ENCODE measurements at regions of chr11 and their contacts with region 1.

Region 1: GRCh38 chr11:9534791-9535781 is 38.4 kb upstream of the WEE1 start:
- DNase-seq: peak; percentile 78
- H3K4me3 ChIP-seq: no peak overlapping the region
- H3K27ac ChIP-seq: no peak overlapping the region
- H3K4me1 ChIP-seq: peaks cover 6% of the 10 kb centered on the region
- H3K27me3 ChIP-seq: no peaks in the 10 kb centered on the region
- CTCF ChIP-seq: peak; percentile 86 to 89

Region 2: DNA sequence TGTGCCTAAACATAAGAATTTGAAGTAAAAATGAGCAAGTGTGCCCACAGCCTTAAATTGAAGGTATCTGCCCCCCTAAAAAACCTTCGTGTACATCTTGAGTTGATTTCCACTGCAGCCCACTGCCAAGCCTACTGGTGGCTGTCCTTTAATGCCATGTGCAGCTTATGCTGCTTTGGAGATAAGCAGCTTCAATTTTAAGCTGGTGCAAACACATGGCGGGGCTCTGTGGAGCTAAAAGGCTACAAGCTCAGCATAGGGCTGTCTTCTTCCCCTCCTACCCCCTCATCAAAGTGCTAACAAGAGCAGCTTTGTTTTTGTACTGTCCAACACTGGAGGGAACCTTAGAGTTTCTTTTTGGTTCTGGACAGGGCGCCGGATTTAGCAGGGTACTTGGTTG is 1142.9 kb before region 1 on chr11:
- CTCF ChIA-PET with region 1: interaction called, 12 read pairs
- dilution Hi-C with region 1: no loop called
- in situ Hi-C with region 1: no loop called
- intact Hi-C with region 1: no loop called
- DNase-seq: no peak
- H3K4me3 ChIP-seq: no peak overlapping the region
- H3K27ac ChIP-seq: no peak overlapping the region
- H3K4me1 ChIP-seq: peaks cover 4% of the 10 kb centered on the region
- H3K27me3 ChIP-seq: peaks cover 2% of the 10 kb centered on the region
- CTCF ChIP-seq: no peak

Region 3: DNA sequence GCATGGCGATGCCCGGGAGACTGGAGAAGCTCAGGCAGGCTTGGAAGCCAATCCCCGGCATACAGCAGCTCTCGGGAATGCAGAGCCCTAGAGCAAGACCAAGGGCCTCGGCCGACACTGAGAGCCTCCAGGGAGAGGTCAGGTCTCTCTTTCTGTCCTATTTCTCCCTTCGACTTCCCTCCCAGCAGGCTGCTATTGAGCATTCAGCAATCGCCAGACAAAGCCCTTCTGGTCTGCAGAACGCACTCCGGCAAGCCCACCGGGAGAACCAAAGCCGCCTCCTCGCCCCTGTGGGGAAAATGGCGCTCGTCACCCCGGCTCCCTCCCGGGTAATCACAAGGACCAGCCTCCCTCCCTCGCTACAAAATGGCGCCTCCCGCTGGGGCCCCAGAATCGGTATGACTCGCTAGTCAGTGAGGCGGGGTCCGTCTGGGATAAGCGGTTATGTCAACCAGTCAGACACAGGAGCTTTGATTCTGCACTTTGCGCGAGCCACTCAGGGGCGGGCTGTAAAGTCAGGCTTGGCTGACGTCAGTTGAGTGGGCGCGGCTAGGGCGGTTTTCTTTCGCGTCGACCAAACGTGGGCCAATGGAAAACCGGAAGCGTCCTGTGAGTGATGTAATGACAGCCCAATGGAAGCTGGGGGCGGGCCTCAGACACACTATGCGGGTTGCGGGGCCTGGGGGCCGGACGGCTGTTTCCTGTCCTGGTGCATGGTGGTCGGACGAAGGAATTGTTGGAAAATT is 74.6 kb before region 1 on chr11 and contains the start of gene ZNF143:
- CTCF ChIA-PET with region 1: no interaction called
- dilution Hi-C with region 1: loop called (anchors 5 kb)
- in situ Hi-C with region 1: no loop called
- intact Hi-C with region 1: no loop called
- DNase-seq: peak; percentile 100
- H3K4me3 ChIP-seq: peak within 1 kb of the TSS; percentile 65 to 88 (median 82)
- H3K27ac ChIP-seq: peak within 1 kb of the TSS; percentile 98
- H3K4me1 ChIP-seq: peaks cover 19% of the 10 kb centered on the region
- H3K27me3 ChIP-seq: no peaks in the 10 kb centered on the region
- CTCF ChIP-seq: no peak
- total RNA-seq, gene ZNF143: 19.5 to 22.7 TPM

Region 4: DNA sequence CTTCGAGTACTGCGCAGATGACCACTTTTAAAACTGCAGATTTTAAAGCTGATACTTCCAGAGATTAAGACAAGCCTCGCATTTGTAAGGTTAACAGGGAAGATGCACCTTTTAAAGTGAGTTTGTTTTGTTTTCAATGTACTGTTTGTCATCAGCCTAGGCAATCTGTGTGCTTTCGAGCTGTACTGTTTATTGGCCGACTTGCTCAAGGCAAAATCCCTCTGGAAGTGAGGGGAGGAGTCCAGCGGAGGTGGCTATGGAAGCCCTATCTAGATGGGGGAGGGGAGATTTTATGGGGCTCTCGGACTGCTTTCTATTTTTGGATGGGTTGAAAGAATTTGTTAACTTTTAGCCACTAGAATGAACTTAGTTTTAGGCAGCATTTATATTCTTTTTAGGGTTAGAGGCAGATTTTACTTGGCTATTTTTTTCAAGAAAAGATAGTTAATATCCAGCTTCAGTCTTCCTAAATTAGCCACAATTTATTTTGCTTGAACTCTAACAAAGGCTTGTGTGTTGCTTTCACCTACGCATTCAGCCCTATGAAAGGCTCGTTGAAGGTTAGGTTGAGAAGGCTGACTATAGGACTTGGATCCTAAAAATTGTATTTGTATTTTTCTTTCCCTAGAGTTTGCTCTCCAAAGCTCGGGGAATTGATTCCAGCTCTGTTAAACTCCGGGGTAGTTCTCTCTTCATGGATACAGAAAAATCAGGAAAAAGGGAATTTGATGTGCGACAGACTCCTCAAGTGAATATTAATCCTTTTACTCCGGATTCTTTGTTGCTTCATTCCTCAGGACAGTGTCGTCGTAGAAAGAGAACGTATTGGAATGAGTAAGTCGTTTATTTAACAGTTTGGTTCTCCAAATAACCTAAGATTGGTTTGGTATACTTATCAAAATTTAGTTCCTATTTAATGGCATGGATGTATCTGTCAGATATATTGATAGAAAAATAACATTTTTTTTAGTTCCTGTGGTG is 40.5 kb after region 1 on chr11:
- CTCF ChIA-PET with region 1: interaction called, 11 read pairs
- dilution Hi-C with region 1: no loop called
- in situ Hi-C with region 1: no loop called
- intact Hi-C with region 1: loop called (anchors 1 kb)
- DNase-seq: peak; percentile 86
- H3K4me3 ChIP-seq: peak overlapping the region; percentile 87 to 97 (median 89)
- H3K27ac ChIP-seq: peak overlapping the region; percentile 96
- H3K4me1 ChIP-seq: peaks cover 17% of the 10 kb centered on the region
- H3K27me3 ChIP-seq: no peaks in the 10 kb centered on the region
- CTCF ChIP-seq: no peak

Region 5: DNA sequence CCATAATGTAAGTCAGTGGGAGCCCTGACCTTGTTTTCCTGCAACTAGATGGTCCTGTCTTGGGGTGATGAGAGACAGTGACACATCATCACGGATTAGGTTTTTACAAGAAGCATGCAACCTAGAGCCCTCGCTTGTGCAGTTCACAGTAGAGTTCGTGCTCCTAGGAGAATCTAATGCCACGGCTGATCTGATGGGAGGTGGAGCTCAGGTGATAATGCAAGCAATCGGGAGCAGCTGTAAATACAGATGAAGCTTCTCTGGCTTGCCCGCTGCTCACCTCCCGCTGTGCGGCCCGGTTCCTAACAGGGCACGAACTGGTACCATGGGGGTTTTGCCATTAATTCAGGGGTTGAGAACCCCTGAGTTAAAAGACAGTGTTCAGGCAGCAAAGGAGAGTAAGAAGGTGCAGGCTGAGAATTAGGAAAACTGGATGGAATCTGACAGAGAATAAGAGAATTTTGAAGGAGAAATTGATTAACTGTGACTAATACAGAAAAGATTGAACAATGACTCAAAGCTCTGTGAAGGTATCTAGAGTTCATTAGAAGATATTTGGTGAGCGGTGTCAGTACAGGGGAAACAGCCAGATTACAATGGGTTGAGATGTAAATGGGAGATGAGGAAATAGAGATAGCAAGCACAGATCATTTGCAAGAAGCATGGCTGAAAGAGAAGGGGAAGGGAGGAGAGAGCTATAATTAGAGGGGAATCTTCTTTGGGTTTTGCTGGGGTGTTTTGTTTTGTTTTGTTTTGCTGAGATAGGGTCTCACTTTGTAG is 59.4 kb after region 1 on chr11:
- CTCF ChIA-PET with region 1: no interaction called
- dilution Hi-C with region 1: loop called (anchors 5 kb)
- in situ Hi-C with region 1: no loop called
- intact Hi-C with region 1: no loop called
- DNase-seq: no peak
- H3K4me3 ChIP-seq: no peak overlapping the region
- H3K27ac ChIP-seq: no peak overlapping the region
- H3K4me1 ChIP-seq: no peaks in the 10 kb centered on the region
- H3K27me3 ChIP-seq: no peaks in the 10 kb centered on the region
- CTCF ChIP-seq: no peak

Region 6: DNA sequence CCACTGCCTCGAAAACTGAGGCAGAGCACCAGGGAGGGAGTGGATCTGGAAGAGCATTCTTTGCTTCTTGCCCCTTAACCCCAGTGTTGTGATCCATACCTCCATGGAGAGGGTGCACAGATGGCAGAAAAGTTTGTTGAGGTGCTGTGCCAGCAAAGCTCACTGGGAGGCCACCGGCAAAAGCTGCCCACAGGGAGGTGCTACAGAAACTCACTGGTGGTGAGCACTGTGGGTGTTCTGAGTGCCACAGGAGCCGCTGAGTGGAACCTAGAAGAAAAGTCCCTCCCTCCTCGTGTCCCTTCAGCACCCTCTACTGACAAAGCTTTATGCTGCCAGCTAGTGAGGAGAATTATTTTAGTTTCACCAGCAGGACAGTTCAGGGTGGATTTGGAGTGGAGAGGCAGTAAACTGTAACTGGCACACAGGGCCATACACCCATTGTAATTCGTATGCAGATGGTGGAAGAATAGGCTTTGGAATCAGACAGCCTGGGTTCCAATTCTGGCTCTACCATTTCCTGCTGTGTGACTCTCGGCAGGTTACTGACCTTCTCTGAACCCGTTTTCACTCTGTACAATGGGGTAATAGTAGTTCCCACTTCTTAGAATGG is 213.4 kb after region 1 on chr11:
- CTCF ChIA-PET with region 1: no interaction called
- dilution Hi-C with region 1: no loop called
- in situ Hi-C with region 1: no loop called
- intact Hi-C with region 1: loop called (anchors 5 kb)
- DNase-seq: peak; percentile 68
- H3K4me3 ChIP-seq: no peak overlapping the region
- H3K27ac ChIP-seq: peak overlapping the region; percentile 18
- H3K4me1 ChIP-seq: peaks cover 18% of the 10 kb centered on the region
- H3K27me3 ChIP-seq: no peaks in the 10 kb centered on the region
- CTCF ChIP-seq: peak; percentile 72 to 74

Measured in mammary epithelial cell (primary cell).